Endothelial cell of umbilical vein (primary cell): ENCODE measurements at regions of chr11 and their contacts with region 1.

Region 1: DNA sequence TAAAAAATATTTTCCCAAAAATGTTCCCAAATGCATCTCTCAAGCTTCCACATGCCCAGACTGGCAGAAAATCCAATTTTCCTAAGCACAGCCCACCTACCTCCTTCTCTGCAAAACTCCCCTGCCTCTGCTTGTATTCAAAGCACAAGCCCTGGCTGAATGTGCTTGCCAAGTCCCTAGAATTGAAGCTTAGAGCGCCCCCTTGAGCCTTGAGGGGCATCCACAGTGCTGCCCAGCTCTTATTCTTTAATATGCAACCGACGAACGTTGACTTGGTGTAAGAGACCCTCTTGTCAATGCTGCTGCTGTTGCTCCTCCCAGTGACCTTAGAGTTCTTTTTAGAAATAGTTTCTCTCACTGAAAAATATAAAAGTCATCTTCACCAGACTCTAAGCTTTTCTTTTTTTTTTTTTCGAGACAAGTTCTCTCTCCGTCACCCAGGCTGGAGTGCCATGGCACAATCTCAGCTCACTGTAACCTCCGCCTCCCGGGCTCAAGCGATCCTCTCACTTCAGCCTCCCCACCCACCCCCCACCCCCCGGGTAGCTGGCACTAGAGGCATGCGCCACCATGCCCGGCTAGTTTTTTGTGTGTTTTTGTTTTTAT is 63.5 kb upstream of the CAPRIN1 start:
- DNase-seq: peak; percentile 80
- H3K4me3 ChIP-seq: no peak overlapping the region
- H3K27ac ChIP-seq: no peak overlapping the region
- H3K4me1 ChIP-seq: no peaks in the 10 kb centered on the region
- H3K27me3 ChIP-seq: peaks cover 2 to 3% of the 10 kb centered on the region in 2 experiments
- CTCF ChIP-seq: peak; percentile 90 to 91
- POLR2A ChIP-seq: no peak

Region 2: DNA sequence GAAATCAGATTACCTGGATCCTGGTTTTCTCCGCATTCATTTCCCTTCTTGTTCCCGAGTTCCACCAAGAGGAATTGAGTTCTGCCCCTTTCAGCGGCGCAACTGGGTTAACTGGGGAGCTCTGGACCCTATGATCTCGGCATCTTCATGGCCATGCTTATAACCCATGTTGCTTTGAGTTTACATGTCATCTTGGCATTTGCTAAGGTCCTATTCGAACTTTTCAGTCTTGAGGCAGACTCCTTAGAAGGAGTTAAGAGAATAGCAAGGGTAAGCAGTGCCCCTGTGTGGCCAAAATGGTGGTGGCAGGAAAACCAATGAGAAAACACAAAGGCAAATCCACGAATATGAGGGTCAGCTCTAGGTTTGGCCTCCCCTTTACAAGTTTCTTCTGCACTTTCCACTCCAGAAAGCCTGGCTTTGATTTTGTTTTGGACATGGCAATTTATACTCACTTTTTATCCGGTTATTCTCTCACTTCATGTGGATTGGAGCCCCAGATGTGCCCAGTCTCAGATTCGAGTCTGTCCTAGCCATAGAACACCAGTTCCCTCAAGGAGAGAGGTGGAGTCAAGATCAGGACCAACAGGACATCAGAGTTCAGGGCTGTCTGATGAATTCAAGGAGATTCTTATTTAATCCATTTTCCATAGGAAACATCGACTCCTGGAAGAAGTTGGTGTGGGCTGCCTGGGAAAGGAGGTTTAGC is 158.5 kb before region 1 on chr11:
- CTCF ChIA-PET with region 1: interaction called, 58 read pairs
- POLR2A ChIA-PET with region 1: no interaction called
- dilution Hi-C with region 1: no loop called
- intact Hi-C with region 1: no loop called
- DNase-seq: peak; percentile 76
- H3K4me3 ChIP-seq: peak overlapping the region; percentile 0 to 29 (median 25)
- H3K27ac ChIP-seq: no peak overlapping the region
- H3K4me1 ChIP-seq: peaks cover 4% of the 10 kb centered on the region
- H3K27me3 ChIP-seq: peaks cover 17 to 19% of the 10 kb centered on the region in 2 experiments
- CTCF ChIP-seq: peak; percentile 74 to 81
- POLR2A ChIP-seq: no peak

Region 3: GRCh38 chr11:33842236-33842915 is 145.7 kb before region 1 on chr11:
- CTCF ChIA-PET with region 1: interaction called, 21 read pairs
- POLR2A ChIA-PET with region 1: no interaction called
- dilution Hi-C with region 1: no loop called
- intact Hi-C with region 1: no loop called
- DNase-seq: no peak
- H3K4me3 ChIP-seq: no peak overlapping the region
- H3K27ac ChIP-seq: no peak overlapping the region
- H3K4me1 ChIP-seq: no peaks in the 10 kb centered on the region
- H3K27me3 ChIP-seq: peaks cover 24 to 27% of the 10 kb centered on the region in 2 experiments
- CTCF ChIP-seq: no peak
- POLR2A ChIP-seq: no peak

Region 4: DNA sequence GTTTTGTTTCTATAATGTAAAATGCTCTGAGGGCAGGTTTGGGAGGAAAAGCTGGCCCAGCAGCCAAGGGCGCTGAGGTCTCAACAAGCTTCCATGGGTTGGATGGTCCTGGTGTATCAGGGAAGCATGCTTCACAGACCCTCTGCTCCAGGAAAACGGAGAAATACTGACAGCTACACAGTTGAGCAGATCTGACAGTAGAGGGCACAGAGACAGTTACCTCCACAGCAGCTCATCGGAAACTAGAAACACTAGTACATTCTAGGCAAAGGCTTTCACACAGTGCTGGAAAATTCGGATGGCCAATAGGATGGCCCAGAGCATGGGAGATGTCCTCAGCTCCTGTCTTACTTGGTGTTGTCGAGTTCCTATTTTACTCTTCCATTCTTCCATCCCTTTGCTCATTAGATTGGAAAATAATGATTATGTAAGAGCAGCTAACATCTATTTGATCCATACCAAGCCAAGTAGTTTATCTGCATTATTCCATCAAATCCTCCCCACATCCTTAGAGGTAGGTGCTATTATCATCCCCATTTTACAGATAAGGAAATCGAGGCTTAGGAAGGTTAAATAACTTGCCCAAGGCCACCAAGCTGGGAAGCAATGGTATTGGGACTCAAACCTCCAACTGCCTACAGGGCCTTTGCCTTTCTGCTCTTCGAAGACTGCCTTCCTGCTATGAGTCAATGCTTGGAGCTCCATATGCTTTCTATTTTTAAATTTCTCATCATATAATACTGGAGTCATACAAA is 124.5 kb before region 1 on chr11:
- CTCF ChIA-PET with region 1: interaction called, 17 read pairs
- POLR2A ChIA-PET with region 1: no interaction called
- dilution Hi-C with region 1: no loop called
- intact Hi-C with region 1: loop called (anchors 1 kb)
- DNase-seq: no peak
- H3K4me3 ChIP-seq: no peak overlapping the region
- H3K27ac ChIP-seq: no peak overlapping the region
- H3K4me1 ChIP-seq: peaks cover 13% of the 10 kb centered on the region
- H3K27me3 ChIP-seq: no peaks in the 10 kb centered on the region
- CTCF ChIP-seq: no peak
- POLR2A ChIP-seq: no peak

Region 5: DNA sequence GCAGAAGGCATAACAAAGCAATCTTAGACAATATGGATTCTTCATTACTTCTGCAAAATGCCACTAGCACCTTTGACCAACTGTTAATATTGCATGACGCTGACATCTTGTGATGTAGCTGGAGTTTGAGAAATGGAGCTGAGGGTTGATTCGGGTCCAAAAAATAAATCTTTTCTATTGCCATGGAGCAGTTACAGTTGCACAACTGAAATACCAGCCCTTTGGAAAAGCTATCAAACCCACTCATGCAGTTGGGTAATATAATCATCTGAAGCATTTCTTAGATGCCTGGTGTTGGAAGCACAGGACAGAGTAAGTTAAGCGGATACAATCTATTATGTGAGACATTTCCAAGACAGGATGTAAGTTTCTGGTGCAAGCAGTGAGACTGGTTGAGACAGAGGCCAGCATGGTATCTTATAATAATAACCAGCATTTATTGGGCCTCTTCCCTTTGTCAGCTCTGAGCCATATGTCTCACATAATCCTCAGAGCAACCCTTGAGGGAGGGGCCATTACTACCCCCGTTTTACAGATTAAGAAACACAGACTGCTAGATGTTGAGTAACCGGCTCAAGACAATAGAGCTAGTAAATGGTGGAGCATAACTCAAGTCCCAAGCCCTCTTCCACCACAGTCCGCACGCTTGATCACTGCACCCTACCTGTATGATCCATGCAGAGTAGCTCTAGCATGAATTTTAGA is 11.4 kb before region 1 on chr11:
- CTCF ChIA-PET with region 1: interaction called, 35 read pairs
- POLR2A ChIA-PET with region 1: no interaction called
- dilution Hi-C with region 1: no loop called
- intact Hi-C with region 1: loop called (anchors 1 kb)
- DNase-seq: no peak
- H3K4me3 ChIP-seq: no peak overlapping the region
- H3K27ac ChIP-seq: no peak overlapping the region
- H3K4me1 ChIP-seq: no peaks in the 10 kb centered on the region
- H3K27me3 ChIP-seq: peaks cover 0 to 7% of the 10 kb centered on the region in 2 experiments
- CTCF ChIP-seq: no peak
- POLR2A ChIP-seq: no peak

Region 6: GRCh38 chr11:34084637-34085036 is 96.6 kb after region 1 on chr11:
- CTCF ChIA-PET with region 1: no interaction called
- POLR2A ChIA-PET with region 1: no interaction called
- dilution Hi-C with region 1: no loop called
- intact Hi-C with region 1: no loop called
- DNase-seq: no peak
- H3K4me3 ChIP-seq: no peak overlapping the region
- H3K27ac ChIP-seq: no peak overlapping the region
- H3K4me1 ChIP-seq: no peaks in the 10 kb centered on the region
- H3K27me3 ChIP-seq: no peaks in the 10 kb centered on the region
- CTCF ChIP-seq: no peak
- POLR2A ChIP-seq: no peak

Region 7: GRCh38 chr11:34234086-34234740 is 246.1 kb after region 1 on chr11:
- CTCF ChIA-PET with region 1: no interaction called
- POLR2A ChIA-PET with region 1: no interaction called
- dilution Hi-C with region 1: no loop called
- intact Hi-C with region 1: no loop called
- DNase-seq: peak; percentile 6
- H3K4me3 ChIP-seq: no peak overlapping the region
- H3K27ac ChIP-seq: no peak overlapping the region
- H3K4me1 ChIP-seq: peaks cover 6% of the 10 kb centered on the region
- H3K27me3 ChIP-seq: peaks cover 2 to 6% of the 10 kb centered on the region in 2 experiments
- CTCF ChIP-seq: no peak
- POLR2A ChIP-seq: no peak